GM10248 (cell line): ENCODE measurements at regions of chr11 and their contacts with region 1.

Region 1: GRCh38 chr11:95067039-95067840 is 521 bp downstream of the SRSF8 start:
- DNase-seq: peak; percentile 58
- CTCF ChIP-seq: peak; percentile 47

Region 2: DNA sequence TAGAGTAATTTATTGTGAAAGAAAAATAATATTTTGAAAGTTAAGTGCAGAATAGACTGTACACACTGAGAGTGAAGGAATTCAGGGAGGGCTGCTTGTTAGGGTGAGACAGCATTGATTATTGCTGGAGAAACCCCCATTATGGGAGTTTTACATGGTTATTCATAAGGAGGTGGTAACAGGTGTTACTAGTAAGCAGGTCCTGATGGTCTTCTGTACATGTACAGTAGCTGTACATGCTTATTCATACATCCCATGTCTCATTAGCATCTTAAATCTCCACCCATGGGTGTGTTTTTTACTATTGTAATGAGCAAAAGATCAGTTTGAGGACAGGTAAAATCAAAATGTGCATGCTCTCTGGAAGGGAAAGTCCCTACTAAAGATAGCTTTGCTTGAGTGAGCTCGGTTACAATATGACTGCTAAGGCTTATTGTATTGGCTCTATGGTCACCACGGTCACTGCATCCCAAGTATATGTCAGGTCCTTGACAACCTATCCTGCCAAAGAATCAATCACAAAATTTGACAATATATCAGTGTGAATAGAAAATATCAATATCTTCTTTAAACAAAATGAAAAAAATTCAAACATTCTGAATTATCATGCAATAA is 11.8 kb before region 1 on chr11:
- CTCF ChIA-PET with region 1: interaction called, 56 read pairs
- POLR2A ChIA-PET with region 1: interaction called, 5 read pairs
- DNase-seq: peak; percentile 35
- CTCF ChIP-seq: no peak

Region 3: DNA sequence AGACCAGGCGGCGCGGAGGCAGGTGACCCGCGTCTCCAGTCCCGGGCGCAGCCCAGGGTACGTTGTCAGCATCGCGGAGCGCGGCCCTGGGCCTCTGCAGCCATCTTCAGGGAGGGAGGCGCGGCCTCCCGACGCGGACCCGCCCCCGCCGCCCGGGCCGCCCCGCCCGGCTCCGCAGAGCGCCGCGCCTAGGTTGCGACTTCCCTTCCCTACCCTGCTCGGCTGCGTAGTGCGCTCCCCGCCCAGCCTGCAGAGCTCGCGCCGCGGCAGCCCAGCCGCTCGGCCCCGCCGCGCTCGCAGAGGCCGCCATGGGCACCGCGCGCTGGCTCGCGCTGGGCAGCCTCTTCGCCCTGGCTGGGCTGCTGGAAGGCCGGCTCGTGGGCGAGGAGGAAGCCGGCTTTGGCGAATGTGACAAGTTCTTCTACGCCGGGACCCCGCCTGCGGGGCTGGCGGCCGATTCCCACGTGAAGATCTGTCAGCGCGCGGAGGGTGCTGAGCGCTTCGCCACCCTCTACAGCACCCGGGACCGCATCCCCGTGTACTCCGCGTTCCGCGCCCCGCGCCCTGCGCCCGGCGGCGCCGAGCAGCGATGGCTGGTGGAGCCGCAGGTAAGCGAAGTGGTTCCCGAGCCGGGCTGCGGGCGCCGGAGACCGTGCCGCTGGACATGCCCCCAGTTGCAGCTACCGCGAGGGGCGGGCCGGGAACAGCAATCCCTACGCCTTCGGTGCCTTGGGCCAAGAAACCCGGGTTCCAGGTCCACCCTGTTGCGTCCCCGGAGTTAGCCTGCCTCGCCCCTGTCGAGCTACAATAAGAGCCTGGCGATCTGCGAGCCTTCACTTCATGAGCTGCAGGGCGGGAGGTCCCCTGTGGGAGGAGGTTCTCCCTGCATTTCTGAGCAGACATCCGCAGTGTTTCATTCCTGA is 22.6 kb after region 1 on chr11 and contains the start of gene ENDOD1:
- CTCF ChIA-PET with region 1: interaction called, 306 read pairs
- POLR2A ChIA-PET with region 1: interaction called, 7 read pairs
- DNase-seq: peak; percentile 91
- CTCF ChIP-seq: no peak

Region 4: DNA sequence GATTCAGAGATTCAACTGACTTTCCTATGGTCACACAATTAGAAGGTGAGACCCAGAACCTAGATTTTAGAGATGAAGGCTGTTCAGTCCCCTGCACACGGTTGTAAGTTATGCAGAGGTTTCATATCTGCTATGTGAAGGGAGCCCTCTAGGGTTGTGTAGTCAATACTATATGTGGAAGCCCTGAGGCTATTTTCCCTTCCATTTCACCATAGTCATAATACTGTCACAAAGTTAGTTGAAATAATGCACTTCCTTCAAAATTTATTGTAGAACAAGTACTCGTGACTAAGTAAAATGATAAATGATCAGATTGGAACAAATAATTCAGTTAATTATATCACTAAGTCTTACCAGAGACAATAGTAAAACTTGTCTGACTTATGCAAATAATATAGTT is 71.2 kb after region 1 on chr11:
- CTCF ChIA-PET with region 1: interaction called, 14 read pairs
- POLR2A ChIA-PET with region 1: no interaction called
- DNase-seq: peak; percentile 54
- CTCF ChIP-seq: peak; percentile 48

Region 5: GRCh38 chr11:95764267-95764898 is 697.1 kb after region 1 on chr11:
- CTCF ChIA-PET with region 1: interaction called, 10 read pairs
- POLR2A ChIA-PET with region 1: no interaction called
- DNase-seq: peak; percentile 48
- CTCF ChIP-seq: peak; percentile 31